ENCODE measurements at regions of chr5 and their contacts with region 1.

Region 1: DNA sequence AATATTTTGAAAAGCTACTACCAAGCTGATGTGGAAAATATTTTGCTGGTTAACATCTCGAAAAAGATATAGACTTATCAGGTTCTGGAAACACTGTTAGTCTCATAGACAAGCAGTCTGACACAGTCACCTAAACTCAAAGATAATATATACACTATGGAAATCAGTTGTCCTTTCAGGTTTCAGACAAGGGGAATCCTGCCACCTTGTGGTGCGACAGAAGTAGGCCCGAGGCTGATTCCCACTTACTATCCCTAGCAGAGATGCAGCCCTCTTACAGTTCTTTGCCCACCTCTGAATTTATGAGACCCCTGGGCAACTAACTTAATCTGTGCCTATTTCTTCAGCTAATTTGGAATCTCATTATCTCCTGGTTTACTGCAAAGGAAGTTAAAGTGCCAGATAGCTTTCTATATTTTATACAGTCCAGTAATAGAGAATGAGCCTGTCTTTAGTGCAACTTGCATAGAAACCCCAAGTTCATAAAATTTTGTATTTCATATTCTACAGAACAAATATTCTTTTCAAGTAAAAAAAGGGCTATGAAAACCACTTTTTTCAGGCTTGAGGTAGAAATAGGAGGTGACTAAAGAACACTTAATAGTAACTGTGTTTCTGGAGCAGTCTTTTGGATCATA is 16.9 kb downstream of the RAD1 start:
- DNase-seq: peak; percentile 53
- H3K4me3 ChIP-seq: no peak overlapping the region; a peak in 1 of 4 replicates
- H3K27ac ChIP-seq: 0 out of 4 replicates have a peak overlapping the region, but pooled peaks of 1 of the 2 experiments have one; percentile 15
- H3K4me1 ChIP-seq: 0 out of 4 replicates have a peak, but pooled peaks cover 0 to 7% of the 10 kb centered on the region in 2 experiments
- H3K27me3 ChIP-seq: no peaks in the 10 kb centered on the region
- CTCF ChIP-seq: peak; percentile 88
- EP300 ChIP-seq: no peak
- RAD21 ChIP-seq: peak; percentile 85

Region 2: DNA sequence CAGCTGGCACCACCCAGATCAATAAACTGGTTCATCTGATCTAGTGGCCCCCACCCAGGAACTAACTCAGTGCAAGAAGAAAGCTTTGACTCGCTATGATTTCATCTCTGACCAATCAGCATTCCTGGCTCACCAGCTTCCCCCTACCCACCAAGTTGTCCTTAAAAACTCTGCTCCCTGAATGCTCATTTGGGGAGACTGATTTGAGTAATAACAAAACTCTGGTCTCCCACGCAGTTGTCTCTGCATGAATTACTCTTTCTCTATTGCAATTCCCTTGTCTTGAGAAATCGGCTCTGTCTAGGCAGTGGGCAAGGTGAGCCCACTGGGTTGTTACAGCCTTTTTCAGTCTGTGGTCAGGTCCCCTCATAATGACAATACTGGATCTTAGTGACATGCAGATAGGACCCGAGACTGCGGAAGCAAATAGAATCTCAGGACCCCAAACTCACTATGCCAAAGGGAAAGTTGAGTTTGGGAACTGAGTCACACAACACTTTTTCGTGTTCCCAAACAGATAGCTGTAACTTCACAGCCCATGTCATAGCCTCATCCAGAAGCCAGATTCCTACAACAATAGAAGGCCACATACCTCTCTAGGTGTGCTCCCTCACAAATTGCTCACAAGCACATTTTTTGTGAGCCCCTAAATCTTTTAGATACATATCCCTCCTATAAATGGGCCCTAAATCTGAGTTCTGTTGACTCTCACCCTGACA is 417.4 kb before region 1 on chr5:
- CTCF ChIA-PET with region 1: interaction called, 40 read pairs
- POLR2A ChIA-PET with region 1: no interaction called
- DNase-seq: no peak
- H3K4me3 ChIP-seq: no peak overlapping the region
- H3K27ac ChIP-seq: no peak overlapping the region
- H3K4me1 ChIP-seq: no peaks in the 10 kb centered on the region; a peak in 1 of 4 replicates
- H3K27me3 ChIP-seq: no peaks in the 10 kb centered on the region
- CTCF ChIP-seq: no peak
- EP300 ChIP-seq: no peak
- RAD21 ChIP-seq: no peak

Region 3: GRCh38 chr5:34499001-34499734 is 399.2 kb before region 1 on chr5:
- CTCF ChIA-PET with region 1: interaction called, 10 read pairs
- POLR2A ChIA-PET with region 1: no interaction called
- DNase-seq: no peak
- H3K4me3 ChIP-seq: no peak overlapping the region
- H3K27ac ChIP-seq: peak overlapping the region in 1 of 2 experiments; percentile 94; a peak in 2 of 4 replicates
- H3K4me1 ChIP-seq: peaks cover 3 to 16% of the 10 kb centered on the region in 2 experiments; a peak in 3 of 4 replicates
- H3K27me3 ChIP-seq: no peaks in the 10 kb centered on the region
- CTCF ChIP-seq: no peak
- EP300 ChIP-seq: no peak
- RAD21 ChIP-seq: no peak

Region 4: GRCh38 chr5:34533582-34534522 is 364.5 kb before region 1 on chr5:
- CTCF ChIA-PET with region 1: interaction called, 87 read pairs
- POLR2A ChIA-PET with region 1: no interaction called
- DNase-seq: no peak
- H3K4me3 ChIP-seq: no peak overlapping the region
- H3K27ac ChIP-seq: peak overlapping the region; percentile 78 to 96
- H3K4me1 ChIP-seq: peaks cover 3 to 29% of the 10 kb centered on the region in 2 experiments
- H3K27me3 ChIP-seq: no peaks in the 10 kb centered on the region
- CTCF ChIP-seq: no peak
- EP300 ChIP-seq: 0 out of 4 replicates have a peak, but pooled peaks of 1 of the 2 experiments have one; percentile 22
- RAD21 ChIP-seq: no peak

Region 5: GRCh38 chr5:34886392-34887119 is 11.8 kb before region 1 on chr5:
- CTCF ChIA-PET with region 1: interaction called, 18 read pairs
- POLR2A ChIA-PET with region 1: no interaction called
- DNase-seq: no peak
- H3K4me3 ChIP-seq: no peak overlapping the region
- H3K27ac ChIP-seq: no peak overlapping the region
- H3K4me1 ChIP-seq: peaks cover 0 to 2% of the 10 kb centered on the region in 2 experiments; a peak in 2 of 4 replicates
- H3K27me3 ChIP-seq: no peaks in the 10 kb centered on the region
- CTCF ChIP-seq: no peak
- EP300 ChIP-seq: no peak
- RAD21 ChIP-seq: no peak

Region 6: GRCh38 chr5:34923694-34924461 is 25.5 kb after region 1 on chr5:
- CTCF ChIA-PET with region 1: no interaction called
- POLR2A ChIA-PET with region 1: no interaction called
- DNase-seq: no peak
- H3K4me3 ChIP-seq: no peak overlapping the region
- H3K27ac ChIP-seq: peak overlapping the region; percentile 31 to 74; a peak in 3 of 4 replicates
- H3K4me1 ChIP-seq: peaks cover 0 to 13% of the 10 kb centered on the region in 2 experiments; a peak in 3 of 4 replicates
- H3K27me3 ChIP-seq: no peaks in the 10 kb centered on the region
- CTCF ChIP-seq: no peak
- EP300 ChIP-seq: no peak
- RAD21 ChIP-seq: no peak